H1 (cell line): ENCODE measurements at regions of chr9 and their contacts with region 1.

Region 1: DNA sequence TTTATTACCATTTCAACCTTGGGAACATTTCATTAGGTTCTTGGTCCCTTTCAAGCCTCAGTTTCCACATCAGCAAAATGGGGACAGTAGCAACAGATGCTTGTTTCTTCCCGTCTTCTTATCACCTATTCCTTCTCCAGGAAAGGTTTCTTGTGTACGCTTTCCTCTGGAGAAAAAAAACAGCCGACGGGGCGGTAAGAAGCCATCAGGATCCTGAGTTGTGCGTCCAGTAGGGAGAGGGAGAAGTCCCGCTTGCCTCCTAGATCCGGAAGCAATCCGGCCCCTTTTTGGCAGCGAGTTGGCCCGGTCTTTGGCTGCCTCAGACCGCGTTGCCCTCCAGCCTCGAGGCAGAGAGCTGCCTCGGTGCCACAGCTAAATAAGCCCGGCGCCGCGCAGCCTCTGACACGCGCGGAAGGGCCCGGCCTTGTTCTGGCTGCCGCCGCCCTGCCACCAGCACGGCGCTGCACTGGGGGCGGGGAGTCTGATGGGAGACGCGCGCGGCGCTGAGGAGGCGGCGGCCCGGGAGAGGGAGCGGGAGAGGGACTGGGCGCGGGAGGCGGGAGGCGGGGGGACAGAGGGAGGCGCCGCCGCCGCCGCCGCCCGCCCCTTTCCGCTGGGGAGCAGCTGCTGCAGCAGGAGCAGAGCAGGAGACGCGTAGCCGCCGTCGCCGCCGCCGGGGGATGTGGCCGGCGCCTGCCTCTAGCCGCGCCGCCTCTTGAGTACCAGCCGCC is at the start of gene SLC44A1:
- DNase-seq: peak; percentile 76 to 91
- H3K4me3 ChIP-seq: peak within 1 kb of the TSS; percentile 70 to 84 (median 78)
- H3K27ac ChIP-seq: peak within 1 kb of the TSS; percentile 89
- H3K4me1 ChIP-seq: peaks cover 0 to 33% (median 15%) of the 10 kb centered on the region in 4 experiments; a peak in 6 of 7 replicates
- H3K27me3 ChIP-seq: no peaks in the 10 kb centered on the region
- CTCF ChIP-seq: no peak
- EP300 ChIP-seq: peak in 1 of 2 experiments; percentile 41; a peak in 1 of 3 replicates
- POLR2A ChIP-seq: no peak; a peak in 1 of 3 replicates
- RAD21 ChIP-seq: peak; percentile 7 to 33; a peak in 3 of 4 replicates
- total RNA-seq, gene SLC44A1: 68.1 and 71.2 TPM in 2 replicates

Region 2: GRCh38 chr9:104991144-104991953 is 252.8 kb before region 1 on chr9:
- CTCF ChIA-PET with region 1: no interaction called
- POLR2A ChIA-PET with region 1: interaction called, 25 read pairs
- DNase-seq: peak in 1 of 2 experiments; percentile 85
- H3K4me3 ChIP-seq: peak overlapping the region; percentile 40 to 75 (median 67)
- H3K27ac ChIP-seq: peak overlapping the region; percentile 44
- H3K4me1 ChIP-seq: peaks cover 21 to 31% (median 26%) of the 10 kb centered on the region in 4 experiments
- H3K27me3 ChIP-seq: peaks cover 3 to 18% (median 8%) of the 10 kb centered on the region in 4 experiments; a peak in 4 of 7 replicates
- CTCF ChIP-seq: no peak
- EP300 ChIP-seq: no peak
- POLR2A ChIP-seq: peak in 1 of 2 experiments; percentile 57; a peak in 2 of 3 replicates
- RAD21 ChIP-seq: no peak; a peak in 1 of 4 replicates

Region 3: GRCh38 chr9:105254226-105254625 is 10.1 kb after region 1 on chr9:
- CTCF ChIA-PET with region 1: interaction called, 17 read pairs
- POLR2A ChIA-PET with region 1: interaction called, 12 read pairs
- DNase-seq: no peak
- H3K4me3 ChIP-seq: no peak overlapping the region
- H3K27ac ChIP-seq: no peak overlapping the region
- H3K4me1 ChIP-seq: peaks cover 0 to 17% (median 7%) of the 10 kb centered on the region in 4 experiments; a peak in 3 of 7 replicates
- H3K27me3 ChIP-seq: no peaks in the 10 kb centered on the region
- CTCF ChIP-seq: no peak
- EP300 ChIP-seq: no peak
- POLR2A ChIP-seq: no peak
- RAD21 ChIP-seq: peak in 1 of 2 experiments; percentile 12; a peak in 1 of 4 replicates

Region 4: GRCh38 chr9:105299190-105299854 is 55.2 kb after region 1 on chr9:
- CTCF ChIA-PET with region 1: interaction called, 3 read pairs
- POLR2A ChIA-PET with region 1: interaction called, 16 read pairs
- DNase-seq: no peak
- H3K4me3 ChIP-seq: no peak overlapping the region
- H3K27ac ChIP-seq: peak overlapping the region; percentile 22; the same call in 1 of the 2 replicates
- H3K4me1 ChIP-seq: peaks cover 0 to 27% (median 14%) of the 10 kb centered on the region in 4 experiments; a peak in 6 of 7 replicates
- H3K27me3 ChIP-seq: no peaks in the 10 kb centered on the region
- CTCF ChIP-seq: no peak
- EP300 ChIP-seq: no peak
- POLR2A ChIP-seq: no peak
- RAD21 ChIP-seq: no peak

Region 5: DNA sequence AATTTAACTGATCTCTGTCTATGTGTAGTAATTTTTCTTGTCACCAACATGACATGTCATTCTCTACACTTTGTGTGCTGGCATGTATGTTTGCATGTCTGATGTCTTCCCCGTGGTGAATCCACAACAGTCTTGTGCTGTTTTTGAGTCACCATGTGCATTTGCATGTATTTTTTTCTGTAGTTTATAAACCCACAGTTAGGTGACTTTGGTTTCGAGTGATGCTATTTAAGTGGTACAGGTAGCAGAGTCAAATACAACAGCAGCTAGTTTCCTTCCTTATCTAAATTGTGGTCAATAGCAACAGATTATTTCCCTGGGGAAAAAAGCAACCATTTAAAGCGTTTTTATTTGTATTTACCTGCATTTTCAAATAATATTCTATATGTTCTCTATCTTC is 113.8 kb after region 1 on chr9:
- CTCF ChIA-PET with region 1: interaction called, 12 read pairs
- POLR2A ChIA-PET with region 1: interaction called, 3 read pairs
- DNase-seq: no peak
- H3K4me3 ChIP-seq: no peak overlapping the region
- H3K27ac ChIP-seq: no peak overlapping the region
- H3K4me1 ChIP-seq: no peaks in the 10 kb centered on the region
- H3K27me3 ChIP-seq: no peaks in the 10 kb centered on the region
- CTCF ChIP-seq: no peak
- EP300 ChIP-seq: no peak
- POLR2A ChIP-seq: no peak
- RAD21 ChIP-seq: no peak

Region 6: DNA sequence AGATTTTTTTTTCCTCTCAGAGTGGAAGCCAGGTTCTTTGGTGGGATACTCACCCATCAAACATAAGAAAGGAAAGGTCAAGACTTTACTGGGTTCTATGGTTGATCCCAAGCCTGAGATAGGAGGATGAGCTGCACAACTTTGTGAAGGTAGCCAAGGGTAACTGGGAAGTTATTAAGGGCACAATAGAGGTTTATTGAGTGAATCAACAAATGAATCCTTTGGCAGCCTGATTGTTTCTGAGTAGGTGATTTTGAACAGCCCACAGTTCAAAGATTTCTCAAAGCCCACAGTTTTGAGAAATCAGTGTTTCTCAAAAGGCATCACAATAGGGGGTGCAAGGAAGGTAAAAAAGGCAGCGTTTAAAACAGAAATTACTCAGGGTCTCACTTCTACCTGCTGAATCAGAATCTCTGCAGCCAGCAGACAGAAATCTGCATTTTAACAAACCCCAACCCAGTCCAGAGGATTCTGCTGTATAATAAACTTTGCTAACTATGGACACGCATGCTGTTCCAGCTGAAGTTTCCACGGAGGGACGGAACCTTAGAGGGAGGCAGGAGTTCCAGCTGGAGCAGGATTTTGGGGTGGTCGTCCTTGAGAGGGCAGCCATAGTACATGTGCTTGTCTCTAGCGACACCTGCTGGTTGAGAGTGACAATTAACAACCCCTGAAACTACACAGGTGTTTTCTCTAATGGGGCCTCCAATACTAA is 170.9 kb after region 1 on chr9:
- CTCF ChIA-PET with region 1: interaction called, 10 read pairs
- POLR2A ChIA-PET with region 1: interaction called, 8 read pairs
- DNase-seq: peak in 1 of 2 experiments; percentile 83
- H3K4me3 ChIP-seq: peak overlapping the region in 2 of 4 experiments; percentile 20 to 45; a peak in 2 of 8 replicates
- H3K27ac ChIP-seq: no peak overlapping the region
- H3K4me1 ChIP-seq: peaks cover 0 to 14% (median 6%) of the 10 kb centered on the region in 4 experiments; a peak in 6 of 7 replicates
- H3K27me3 ChIP-seq: no peaks in the 10 kb centered on the region
- CTCF ChIP-seq: peak; percentile 51 to 89 (median 81)
- EP300 ChIP-seq: 0 out of 3 replicates have a peak, but pooled peaks of 1 of the 2 experiments have one; percentile 28
- POLR2A ChIP-seq: no peak
- RAD21 ChIP-seq: peak; percentile 99